WTC11 (cell line): ENCODE measurements at regions of chr19 and their contacts with region 1.

Region 1: GRCh38 chr19:1113033-1113985 is 9.5 kb downstream of the GPX4 start:
- DNase-seq: peak; percentile 98
- ATAC-seq: peak; percentile 81
- H3K4me3 Mint-ChIP-seq: no peak overlapping the region
- H3K27ac Mint-ChIP-seq: no peak overlapping the region; the same call in 1 of the 2 replicates
- H3K4me1 Mint-ChIP-seq: peaks cover 2% of the 10 kb centered on the region; the same call in 1 of the 2 replicates
- H3K27me3 Mint-ChIP-seq: no peaks in the 10 kb centered on the region
- CTCF ChIP-seq: peak; percentile 74

Region 2: GRCh38 chr19:1053176-1054101 is 59.9 kb before region 1 on chr19:
- CTCF ChIA-PET with region 1: no interaction called
- POLR2A ChIA-PET with region 1: no interaction called
- DNase-seq: no peak
- ATAC-seq: no peak
- H3K4me3 Mint-ChIP-seq: no peak overlapping the region
- H3K27ac Mint-ChIP-seq: no peak overlapping the region
- H3K4me1 Mint-ChIP-seq: no peaks in the 10 kb centered on the region
- H3K27me3 Mint-ChIP-seq: peaks cover 4% of the 10 kb centered on the region
- CTCF ChIP-seq: no peak

Region 3: GRCh38 chr19:1064661-1065605 is 48.4 kb before region 1 on chr19:
- CTCF ChIA-PET with region 1: interaction called, 34 read pairs
- POLR2A ChIA-PET with region 1: no interaction called
- DNase-seq: peak; percentile 80
- ATAC-seq: peak; percentile 61
- H3K4me3 Mint-ChIP-seq: peak overlapping the region; percentile 65
- H3K27ac Mint-ChIP-seq: no peak overlapping the region; the same call in 1 of the 2 replicates
- H3K4me1 Mint-ChIP-seq: peaks cover 17% of the 10 kb centered on the region
- H3K27me3 Mint-ChIP-seq: peaks cover 26% of the 10 kb centered on the region
- CTCF ChIP-seq: peak; percentile 55

Region 4: GRCh38 chr19:1131738-1132551 is 18.6 kb after region 1 on chr19:
- CTCF ChIA-PET with region 1: interaction called, 28 read pairs
- POLR2A ChIA-PET with region 1: no interaction called
- DNase-seq: peak; percentile 69
- ATAC-seq: peak; percentile 60
- H3K4me3 Mint-ChIP-seq: peak overlapping the region; percentile 10; the same call in 1 of the 2 replicates
- H3K27ac Mint-ChIP-seq: no peak overlapping the region
- H3K4me1 Mint-ChIP-seq: peaks cover 2% of the 10 kb centered on the region
- H3K27me3 Mint-ChIP-seq: no peaks in the 10 kb centered on the region
- CTCF ChIP-seq: no peak

Region 5: GRCh38 chr19:1154731-1155351 is 41.5 kb after region 1 on chr19:
- CTCF ChIA-PET with region 1: interaction called, 14 read pairs
- POLR2A ChIA-PET with region 1: no interaction called
- DNase-seq: no peak
- ATAC-seq: no peak
- H3K4me3 Mint-ChIP-seq: no peak overlapping the region
- H3K27ac Mint-ChIP-seq: no peak overlapping the region
- H3K4me1 Mint-ChIP-seq: no peaks in the 10 kb centered on the region
- H3K27me3 Mint-ChIP-seq: no peaks in the 10 kb centered on the region
- CTCF ChIP-seq: no peak

Region 6: GRCh38 chr19:1183534-1184172 is 70.3 kb after region 1 on chr19:
- CTCF ChIA-PET with region 1: interaction called, 69 read pairs
- POLR2A ChIA-PET with region 1: no interaction called
- DNase-seq: no peak
- ATAC-seq: no peak
- H3K4me3 Mint-ChIP-seq: no peak overlapping the region
- H3K27ac Mint-ChIP-seq: no peak overlapping the region
- H3K4me1 Mint-ChIP-seq: peaks cover 15% of the 10 kb centered on the region
- H3K27me3 Mint-ChIP-seq: no peaks in the 10 kb centered on the region; the same call in 1 of the 2 replicates
- CTCF ChIP-seq: no peak

Region 7: DNA sequence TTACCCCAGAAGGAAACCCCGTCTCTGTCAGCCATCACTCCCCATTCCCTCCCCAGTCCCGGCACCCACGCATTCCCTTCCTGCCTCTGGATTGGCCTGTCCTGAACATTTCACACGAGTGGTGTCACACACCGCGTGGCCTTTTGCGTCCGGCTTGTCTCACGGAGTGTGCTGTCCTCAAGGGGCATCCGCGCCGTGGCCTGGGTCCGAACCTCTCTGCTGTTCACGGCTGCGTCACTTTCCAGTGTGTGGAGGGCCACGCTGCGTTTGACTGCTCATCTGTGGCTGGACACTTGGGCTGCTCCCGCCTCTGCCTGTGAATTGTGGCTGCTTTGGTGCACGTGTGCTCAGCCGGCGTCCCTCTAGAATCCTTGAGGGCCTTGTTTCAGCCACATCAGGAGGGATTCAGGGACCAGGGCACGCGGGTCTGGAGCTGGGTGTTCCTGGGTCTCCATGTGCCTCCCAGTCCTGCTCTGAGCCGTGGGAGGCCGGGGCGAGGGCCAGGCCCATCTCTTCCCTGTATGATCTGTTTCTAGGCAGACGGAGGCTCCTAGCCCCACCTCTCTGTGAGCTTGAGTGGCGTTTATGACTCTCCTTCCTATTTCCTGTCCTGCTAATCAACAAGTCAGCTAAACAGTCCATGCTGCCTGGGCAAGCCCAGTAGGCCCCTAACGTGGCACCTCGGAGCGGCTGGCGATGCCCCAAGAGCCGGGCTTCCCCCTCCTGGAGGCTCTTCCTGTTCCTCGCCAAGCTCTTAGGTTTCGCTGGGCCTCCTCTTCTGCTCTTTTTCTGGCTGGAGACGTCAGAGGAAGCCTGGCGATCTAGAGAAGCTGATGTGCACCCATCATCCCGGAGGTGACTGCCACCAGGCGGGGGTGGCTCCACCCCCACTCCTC is 100.3 kb after region 1 on chr19:
- CTCF ChIA-PET with region 1: interaction called, 28 read pairs
- POLR2A ChIA-PET with region 1: no interaction called
- DNase-seq: no peak
- ATAC-seq: no peak
- H3K4me3 Mint-ChIP-seq: no peak overlapping the region
- H3K27ac Mint-ChIP-seq: peak overlapping the region; percentile 73
- H3K4me1 Mint-ChIP-seq: peaks cover 44% of the 10 kb centered on the region
- H3K27me3 Mint-ChIP-seq: no peaks in the 10 kb centered on the region
- CTCF ChIP-seq: no peak

Region 8: DNA sequence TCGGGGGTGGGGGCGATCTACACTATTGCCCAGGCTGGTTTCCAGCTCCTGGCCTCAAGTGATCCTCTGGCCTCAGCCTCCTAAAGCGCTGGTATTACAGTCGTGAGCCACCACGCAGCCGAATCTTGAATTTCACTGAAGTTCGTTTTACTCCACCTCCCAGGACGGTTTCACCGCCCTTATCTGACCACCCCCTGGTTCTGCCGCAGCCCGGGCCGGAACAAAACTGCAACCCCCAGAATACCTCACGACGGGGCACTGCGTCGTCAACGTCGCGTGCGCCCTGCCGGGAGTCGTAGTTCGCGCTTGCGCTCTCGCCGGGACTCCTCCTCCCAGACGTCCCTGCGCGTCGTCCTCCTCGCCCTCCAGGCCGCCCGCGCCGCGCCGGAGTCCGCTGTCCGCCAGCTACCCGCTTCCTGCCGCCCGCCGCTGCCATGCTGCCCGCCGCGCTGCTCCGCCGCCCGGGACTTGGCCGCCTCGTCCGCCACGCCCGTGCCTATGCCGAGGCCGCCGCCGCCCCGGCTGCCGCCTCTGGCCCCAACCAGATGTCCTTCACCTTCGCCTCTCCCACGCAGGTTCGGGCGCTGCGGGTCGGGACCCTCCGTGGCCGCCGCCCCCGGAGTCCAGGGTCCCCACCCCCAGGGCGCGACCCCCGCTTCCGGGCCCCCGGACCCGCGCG is 128.2 kb after region 1 on chr19 and contains the start of gene ATP5F1D:
- CTCF ChIA-PET with region 1: interaction called, 20 read pairs
- POLR2A ChIA-PET with region 1: interaction called, 4 read pairs
- DNase-seq: peak; percentile 95
- ATAC-seq: peak; percentile 43
- H3K4me3 Mint-ChIP-seq: peak within 1 kb of the TSS; percentile 86
- H3K27ac Mint-ChIP-seq: peak within 1 kb of the TSS; percentile 87
- H3K4me1 Mint-ChIP-seq: peaks cover 26% of the 10 kb centered on the region
- H3K27me3 Mint-ChIP-seq: peaks cover 4% of the 10 kb centered on the region; the same call in 1 of the 2 replicates
- CTCF ChIP-seq: no peak
- total RNA-seq, gene ATP5F1D: 262 to 277 TPM (median 270 TPM) in 3 replicates